A549 (cell line): ENCODE measurements at regions of chr9 and their contacts with region 1.

Region 1: DNA sequence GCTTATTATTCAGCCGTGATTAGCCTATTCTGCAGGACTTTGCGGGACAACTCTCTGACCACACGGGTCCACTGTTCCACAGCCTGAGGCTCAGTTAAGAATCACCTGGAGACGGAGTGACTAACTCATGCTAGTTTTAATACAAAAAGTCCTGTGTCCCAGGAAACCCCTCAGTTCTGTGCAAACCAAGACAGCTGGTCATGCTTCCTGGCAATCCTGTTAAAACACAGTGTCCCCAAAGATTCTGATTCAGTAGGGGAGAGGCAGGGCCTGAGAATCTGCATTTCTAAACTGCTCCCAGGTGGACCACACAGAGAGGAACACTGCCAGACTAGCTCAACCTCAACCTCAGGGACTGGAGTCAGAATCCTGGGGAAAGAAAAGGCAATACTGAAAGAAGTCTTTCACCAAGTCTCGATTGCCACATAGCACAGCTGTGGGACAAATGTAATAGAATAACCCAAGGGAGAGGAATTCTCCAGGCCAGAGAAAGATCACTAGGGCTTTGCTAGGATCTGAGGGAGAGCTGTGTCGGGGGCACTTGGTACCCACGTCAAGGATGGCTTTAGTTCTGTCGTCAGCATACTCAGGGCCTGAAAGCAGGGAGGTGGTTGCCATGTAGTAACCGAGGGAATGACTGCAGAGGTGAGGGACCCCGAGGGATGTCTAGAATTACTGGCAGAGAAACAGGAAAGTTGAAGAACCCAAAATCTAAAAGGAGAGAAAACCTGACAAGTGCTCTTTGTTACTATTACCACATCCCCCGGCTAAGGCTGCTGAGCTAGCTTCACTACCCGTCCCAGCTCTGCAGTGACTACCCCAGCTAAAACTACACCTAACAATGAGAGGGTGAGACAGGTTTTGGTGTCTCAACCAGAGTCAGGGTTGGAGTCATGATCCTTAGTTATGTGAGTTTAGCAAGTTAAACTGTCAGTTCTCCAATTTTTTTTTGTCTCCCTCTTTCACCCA is 8.6 kb downstream of the SUSD1 start:
- DNase-seq: peak; percentile 51 to 59
- ATAC-seq: peak; percentile 83 to 84
- H3K4me3 ChIP-seq: no peak overlapping the region
- H3K27ac ChIP-seq: peak overlapping the region; percentile 66 to 82
- H3K4me1 ChIP-seq: peaks cover 78% of the 10 kb centered on the region
- CTCF ChIP-seq: 0 out of 3 replicates have a peak, but pooled peaks have one; percentile 18
- EP300 ChIP-seq: no peak
- POLR2A ChIP-seq: no peak
- RAD21 ChIP-seq: peak; percentile 41 to 48

Region 2: DNA sequence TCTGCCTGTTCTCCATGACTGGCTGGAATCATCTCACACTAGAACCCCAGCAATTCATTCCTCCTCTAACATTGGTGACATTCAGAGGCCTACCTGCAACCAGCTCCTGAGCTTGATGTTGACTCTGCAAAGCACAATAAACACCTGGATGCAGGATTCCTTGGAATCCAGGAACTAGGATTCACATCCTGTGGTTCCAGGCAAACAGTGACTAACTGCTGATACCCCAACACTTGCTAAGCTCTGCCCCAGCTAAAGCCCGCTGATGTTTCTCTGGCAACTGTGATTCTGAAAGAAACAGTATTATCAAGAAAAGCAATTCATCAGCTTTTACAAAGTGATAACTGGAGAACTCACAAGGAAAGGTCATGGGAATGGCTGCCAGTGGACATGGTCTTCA is 20.6 kb before region 1 on chr9:
- CTCF ChIA-PET with region 1: interaction called, 12 read pairs
- POLR2A ChIA-PET with region 1: no interaction called
- DNase-seq: peak in 1 of 2 experiments; percentile 64
- ATAC-seq: peak in 1 of 2 experiments; percentile 32; a peak in 2 of 6 replicates
- H3K4me3 ChIP-seq: no peak overlapping the region
- H3K27ac ChIP-seq: peak overlapping the region; percentile 85 to 91
- H3K4me1 ChIP-seq: peaks cover 51% of the 10 kb centered on the region
- CTCF ChIP-seq: no peak
- EP300 ChIP-seq: no peak
- POLR2A ChIP-seq: no peak
- RAD21 ChIP-seq: no peak

Region 3: DNA sequence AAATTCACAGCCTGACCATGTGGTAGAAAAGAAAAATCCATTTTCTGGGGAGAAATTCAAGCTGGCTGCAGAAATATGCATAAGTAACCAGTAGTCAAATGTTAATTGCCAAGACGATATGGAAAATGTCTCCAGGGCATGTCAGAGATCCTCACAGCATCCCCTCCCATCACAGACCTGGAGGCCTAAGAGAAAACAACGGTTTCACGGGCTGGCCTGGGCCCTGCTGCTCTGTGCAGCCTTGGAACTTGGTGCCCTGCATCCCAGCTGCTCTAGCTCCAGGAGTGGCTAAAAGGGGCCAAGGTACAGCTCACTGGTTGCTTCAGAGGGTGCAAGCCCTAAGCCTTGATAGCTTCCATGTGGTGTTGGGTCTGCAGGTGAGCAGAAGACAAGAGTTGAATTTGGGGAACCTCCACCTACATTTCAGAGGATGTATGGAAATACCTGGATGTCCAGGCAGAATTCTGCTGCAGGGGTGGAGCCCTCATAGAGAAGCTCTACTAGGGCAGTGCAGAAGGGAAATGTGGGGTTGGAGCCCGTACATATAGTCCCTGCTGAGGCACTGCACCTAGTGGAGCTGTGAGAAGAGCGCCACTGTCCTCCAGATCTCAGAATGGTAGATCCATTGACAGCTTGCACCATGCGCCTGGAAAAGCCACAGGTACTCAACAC is 117.3 kb after region 1 on chr9:
- CTCF ChIA-PET with region 1: no interaction called
- POLR2A ChIA-PET with region 1: no interaction called
- DNase-seq: peak in 1 of 2 experiments; percentile 29
- ATAC-seq: no peak; a peak in 1 of 6 replicates
- H3K4me3 ChIP-seq: no peak overlapping the region
- H3K27ac ChIP-seq: no peak overlapping the region
- H3K4me1 ChIP-seq: peaks cover 19% of the 10 kb centered on the region; the same call in 2 of the 3 replicates
- CTCF ChIP-seq: no peak
- EP300 ChIP-seq: no peak
- POLR2A ChIP-seq: no peak
- RAD21 ChIP-seq: no peak

Region 4: GRCh38 chr9:112295174-112295573 is 128.7 kb after region 1 on chr9:
- CTCF ChIA-PET with region 1: no interaction called
- POLR2A ChIA-PET with region 1: interaction called, 12 read pairs
- DNase-seq: no peak
- ATAC-seq: no peak
- H3K4me3 ChIP-seq: no peak overlapping the region
- H3K27ac ChIP-seq: no peak overlapping the region
- H3K4me1 ChIP-seq: peaks cover 23% of the 10 kb centered on the region
- CTCF ChIP-seq: no peak
- EP300 ChIP-seq: no peak
- POLR2A ChIP-seq: no peak
- RAD21 ChIP-seq: no peak